ENCODE measurements at regions of chr2 and their contacts with region 1.

Region 1: DNA sequence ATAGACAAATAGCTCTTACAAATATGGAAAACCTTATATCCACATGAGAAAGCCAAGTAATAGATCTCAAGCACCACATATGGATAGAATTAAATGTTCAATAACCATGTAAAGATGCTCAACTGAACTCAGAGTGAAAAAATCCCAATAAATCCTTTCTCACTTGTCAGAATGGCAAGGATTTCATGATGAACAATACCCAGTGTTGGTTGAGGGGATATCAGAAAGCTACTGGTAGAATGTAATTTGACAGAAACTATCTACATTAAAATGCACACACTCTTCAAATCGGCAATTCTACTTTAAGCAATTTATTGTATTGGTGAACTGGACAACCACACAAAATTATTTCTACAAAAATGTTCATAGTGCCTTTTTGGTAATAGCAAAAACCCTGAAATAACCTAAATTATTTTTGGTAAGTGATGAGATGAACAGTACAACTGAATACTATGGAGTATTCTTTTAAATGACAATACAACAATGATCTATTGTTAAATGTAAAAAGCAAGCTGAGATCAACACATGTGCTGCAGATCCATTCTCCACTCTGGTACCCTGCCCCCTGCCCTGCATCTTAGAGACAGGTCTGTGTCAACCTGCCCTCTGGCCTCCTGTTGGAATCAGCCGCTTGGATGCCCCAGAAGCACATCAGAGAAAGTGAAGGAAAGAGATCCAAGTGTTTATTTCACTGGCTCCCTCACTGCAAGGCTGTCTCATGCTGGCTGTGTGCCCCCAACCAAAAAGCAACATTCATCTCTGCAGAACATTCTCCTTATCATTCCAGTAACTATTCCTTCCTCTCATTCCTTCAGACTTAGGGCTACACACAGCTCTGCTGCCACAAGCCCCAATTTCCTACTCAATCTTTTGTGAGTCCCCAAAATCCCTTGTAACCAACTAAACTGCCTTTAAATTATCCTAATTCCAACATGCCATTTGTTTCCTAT is 442.5 kb downstream of the LRATD1 start:
- DNase-seq: no peak
- H3K4me3 ChIP-seq: no peak overlapping the region
- H3K27ac ChIP-seq: no peak overlapping the region
- H3K4me1 ChIP-seq: no peaks in the 10 kb centered on the region
- H3K27me3 ChIP-seq: no peaks in the 10 kb centered on the region
- CTCF ChIP-seq: no peak
- EP300 ChIP-seq: no peak
- POLR2A ChIP-seq: no peak

Region 2: GRCh38 chr2:15119722-15120175 is 44.7 kb after region 1 on chr2:
- intact Hi-C with region 1: loop called in 1 of 4 experiments (anchors 2 kb)
- DNase-seq: no peak
- H3K4me3 ChIP-seq: no peak overlapping the region
- H3K27ac ChIP-seq: no peak overlapping the region
- H3K4me1 ChIP-seq: no peaks in the 10 kb centered on the region
- H3K27me3 ChIP-seq: no peaks in the 10 kb centered on the region
- CTCF ChIP-seq: no peak
- EP300 ChIP-seq: no peak
- POLR2A ChIP-seq: no peak

Measured in ovary (tissue), 10 donors.